ENCODE measurements at regions of chr3 and their contacts with region 1.

Region 1: GRCh38 chr3:189233225-189233858 is 61.6 kb downstream of the TPRG1 start:
- DNase-seq: peak; percentile 58
- H3K4me3 ChIP-seq: no peak overlapping the region
- H3K27ac ChIP-seq: no peak overlapping the region
- H3K4me1 ChIP-seq: no peaks in the 10 kb centered on the region
- H3K27me3 ChIP-seq: no peaks in the 10 kb centered on the region
- CTCF ChIP-seq: peak; percentile 80 to 90

Region 2: GRCh38 chr3:188531210-188531609 is 702.1 kb before region 1 on chr3:
- CTCF ChIA-PET with region 1: no interaction called
- dilution Hi-C with region 1: no loop called
- in situ Hi-C with region 1: no loop called
- intact Hi-C with region 1: no loop called
- DNase-seq: peak; percentile 71
- H3K4me3 ChIP-seq: no peak overlapping the region
- H3K27ac ChIP-seq: peak overlapping the region; percentile 3
- H3K4me1 ChIP-seq: peaks cover 40% of the 10 kb centered on the region
- H3K27me3 ChIP-seq: no peaks in the 10 kb centered on the region
- CTCF ChIP-seq: no peak

Region 3: DNA sequence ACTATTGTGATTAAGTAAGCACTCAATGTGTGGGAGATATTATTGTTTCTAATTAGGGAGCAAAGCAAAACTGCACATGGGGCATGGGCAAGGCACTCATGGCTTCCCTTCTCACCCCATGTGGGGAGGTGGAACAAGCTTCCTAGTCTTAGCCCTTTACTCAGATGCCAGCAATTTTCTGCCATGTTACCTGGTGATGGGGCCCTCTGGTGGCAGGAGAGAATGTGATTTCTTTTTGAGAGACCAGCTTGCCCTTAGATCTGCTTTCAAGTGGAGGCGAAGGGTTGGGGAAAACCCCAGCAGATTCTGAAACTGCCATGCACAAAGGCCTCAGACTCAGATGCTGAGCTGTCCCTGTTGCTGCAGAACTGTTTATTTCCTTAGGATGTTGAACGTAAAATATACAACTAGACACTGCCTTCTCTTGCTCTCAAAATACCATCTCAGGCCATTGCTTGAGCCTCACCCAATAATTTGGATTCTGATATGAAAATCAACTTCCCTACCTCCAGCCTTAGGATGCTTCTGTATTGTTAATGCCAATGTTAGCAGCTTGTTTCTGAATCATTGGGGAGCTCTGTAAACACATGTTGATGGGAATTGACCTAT is 191.8 kb before region 1 on chr3:
- CTCF ChIA-PET with region 1: no interaction called
- dilution Hi-C with region 1: no loop called
- in situ Hi-C with region 1: no loop called
- intact Hi-C with region 1: loop called (anchors 2 kb)
- DNase-seq: peak; percentile 73
- H3K4me3 ChIP-seq: no peak overlapping the region
- H3K27ac ChIP-seq: no peak overlapping the region
- H3K4me1 ChIP-seq: no peaks in the 10 kb centered on the region
- H3K27me3 ChIP-seq: no peaks in the 10 kb centered on the region
- CTCF ChIP-seq: peak; percentile 64 to 70

Region 4: DNA sequence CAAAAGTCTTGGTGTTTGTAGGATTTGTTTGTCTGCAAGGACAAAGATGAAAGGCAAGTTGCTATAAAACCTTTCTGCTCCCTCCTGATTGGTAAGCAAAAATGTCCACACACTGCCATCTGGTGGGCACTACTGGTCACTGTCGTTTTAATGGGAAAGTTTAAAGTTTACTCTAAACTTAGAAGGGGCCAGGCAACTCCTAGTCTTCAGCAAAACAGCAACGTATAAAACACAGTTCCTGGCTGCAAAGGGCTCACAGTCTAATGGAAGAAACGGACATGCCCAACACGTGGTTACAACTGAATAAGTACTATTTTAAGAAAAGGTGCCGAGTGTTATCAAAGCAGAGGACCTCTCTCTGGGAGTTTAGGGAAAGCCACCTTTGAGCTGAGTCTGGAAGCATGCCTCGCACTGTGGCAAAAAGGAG is 85.2 kb before region 1 on chr3:
- CTCF ChIA-PET with region 1: no interaction called
- dilution Hi-C with region 1: no loop called
- in situ Hi-C with region 1: no loop called
- intact Hi-C with region 1: loop called (anchors 1 kb)
- DNase-seq: peak; percentile 37
- H3K4me3 ChIP-seq: no peak overlapping the region
- H3K27ac ChIP-seq: no peak overlapping the region
- H3K4me1 ChIP-seq: no peaks in the 10 kb centered on the region
- H3K27me3 ChIP-seq: no peaks in the 10 kb centered on the region
- CTCF ChIP-seq: peak; percentile 76 to 86

Region 5: GRCh38 chr3:189908646-189909045 is 675.3 kb after region 1 on chr3:
- CTCF ChIA-PET with region 1: interaction called, 14 read pairs
- dilution Hi-C with region 1: no loop called
- in situ Hi-C with region 1: no loop called
- intact Hi-C with region 1: no loop called
- DNase-seq: peak; percentile 87
- H3K4me3 ChIP-seq: no peak overlapping the region
- H3K27ac ChIP-seq: peak overlapping the region; percentile 100
- H3K4me1 ChIP-seq: peaks cover 49% of the 10 kb centered on the region
- H3K27me3 ChIP-seq: no peaks in the 10 kb centered on the region
- CTCF ChIP-seq: no peak